Endothelial cell of umbilical vein (primary cell): ENCODE measurements at regions of chr6 and their contacts with region 1.

Region 1: DNA sequence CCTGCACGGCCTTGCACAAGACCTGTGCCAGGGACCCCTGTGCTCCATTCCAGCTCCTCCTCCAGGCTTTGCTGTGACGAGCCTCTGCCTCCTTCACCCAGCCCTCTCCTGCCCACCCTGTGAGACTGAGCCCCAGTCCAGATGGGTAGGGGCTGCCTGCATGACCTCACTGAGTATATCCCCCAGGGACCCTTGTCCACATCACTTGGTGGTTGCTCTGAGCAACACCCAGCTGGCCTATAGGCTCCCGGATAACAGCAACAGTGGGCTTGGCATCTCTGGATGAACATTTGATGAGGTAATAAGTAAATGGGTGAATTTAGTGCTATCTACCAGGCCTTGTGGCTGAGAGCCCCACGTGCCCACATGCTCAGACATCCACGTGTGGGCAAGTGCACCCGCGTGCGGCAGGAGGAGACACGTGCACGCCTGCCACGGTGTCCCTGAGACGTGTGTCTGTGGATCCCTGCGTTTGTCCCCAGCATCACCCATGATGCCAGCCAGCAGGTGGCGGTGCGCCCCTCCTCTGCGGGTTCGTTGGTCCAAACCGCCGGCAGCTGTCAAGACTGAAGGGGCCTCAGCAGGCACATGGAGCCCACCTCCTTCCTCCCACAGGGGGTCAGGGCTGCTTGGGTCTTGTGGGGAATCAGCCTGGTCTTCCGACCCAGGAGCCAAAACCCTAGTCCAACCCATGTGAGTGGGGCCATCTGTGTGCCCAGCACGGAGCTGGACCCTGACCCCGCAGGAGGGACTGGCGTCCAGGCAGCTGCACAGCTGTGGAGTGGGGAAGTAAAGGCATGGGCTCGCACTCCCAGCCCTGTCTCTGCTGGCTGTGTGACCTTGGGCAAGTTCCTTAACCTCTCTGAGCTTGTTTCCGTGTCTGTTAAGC is 45.9 kb downstream of the FGD2 start:
- DNase-seq: peak; percentile 79
- H3K4me3 ChIP-seq: no peak overlapping the region
- H3K27ac ChIP-seq: no peak overlapping the region
- H3K4me1 ChIP-seq: no peaks in the 10 kb centered on the region
- H3K27me3 ChIP-seq: peaks cover 0 to 4% of the 10 kb centered on the region in 2 experiments
- CTCF ChIP-seq: peak; percentile 81 to 93
- POLR2A ChIP-seq: no peak

Region 2: DNA sequence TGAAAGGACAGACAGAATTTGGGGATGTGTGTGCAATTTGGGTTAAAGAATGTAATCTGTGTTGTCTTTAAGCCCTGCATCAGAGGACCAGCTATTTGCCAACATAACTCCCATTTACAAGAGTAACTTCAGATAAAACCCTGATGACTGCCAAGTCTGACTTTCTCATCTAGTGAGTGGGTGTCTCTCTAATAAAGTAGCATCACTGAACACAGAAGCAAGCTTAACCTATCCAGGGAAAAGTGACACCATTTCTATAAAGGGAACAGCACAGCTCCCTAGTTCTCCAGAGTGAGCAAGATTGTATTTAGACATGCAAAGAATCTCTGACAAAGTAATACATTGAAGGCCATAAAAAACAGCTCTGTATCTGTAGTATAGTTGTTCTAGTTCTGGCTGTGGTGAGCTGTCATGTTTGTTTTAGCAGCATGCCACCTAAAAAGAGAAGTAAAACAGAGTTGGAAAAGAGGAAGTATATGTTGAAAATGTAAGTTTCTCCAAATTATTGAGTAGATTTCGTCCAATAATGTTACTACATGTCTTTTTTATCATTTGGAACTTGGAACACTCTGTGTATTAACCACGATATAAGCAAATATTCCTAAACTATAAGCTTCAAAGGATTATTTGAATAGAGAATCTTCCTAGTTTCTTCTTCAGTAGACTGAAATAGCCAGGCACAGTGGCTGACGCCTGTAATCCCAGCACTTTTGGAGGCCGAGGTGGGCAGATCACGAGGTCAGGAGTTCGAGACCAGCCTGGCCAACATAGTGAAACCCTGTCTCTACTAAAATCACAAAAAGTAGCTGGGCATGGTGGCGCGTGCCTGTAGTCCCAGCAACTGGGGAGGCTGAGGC is 109.8 kb after region 1 on chr6:
- CTCF ChIA-PET with region 1: interaction called, 12 read pairs
- POLR2A ChIA-PET with region 1: no interaction called
- dilution Hi-C with region 1: no loop called
- intact Hi-C with region 1: no loop called
- DNase-seq: no peak
- H3K4me3 ChIP-seq: no peak overlapping the region
- H3K27ac ChIP-seq: no peak overlapping the region
- H3K4me1 ChIP-seq: peaks cover 3% of the 10 kb centered on the region
- H3K27me3 ChIP-seq: peaks cover 0 to 4% of the 10 kb centered on the region in 2 experiments
- CTCF ChIP-seq: no peak
- POLR2A ChIP-seq: no peak

Region 3: DNA sequence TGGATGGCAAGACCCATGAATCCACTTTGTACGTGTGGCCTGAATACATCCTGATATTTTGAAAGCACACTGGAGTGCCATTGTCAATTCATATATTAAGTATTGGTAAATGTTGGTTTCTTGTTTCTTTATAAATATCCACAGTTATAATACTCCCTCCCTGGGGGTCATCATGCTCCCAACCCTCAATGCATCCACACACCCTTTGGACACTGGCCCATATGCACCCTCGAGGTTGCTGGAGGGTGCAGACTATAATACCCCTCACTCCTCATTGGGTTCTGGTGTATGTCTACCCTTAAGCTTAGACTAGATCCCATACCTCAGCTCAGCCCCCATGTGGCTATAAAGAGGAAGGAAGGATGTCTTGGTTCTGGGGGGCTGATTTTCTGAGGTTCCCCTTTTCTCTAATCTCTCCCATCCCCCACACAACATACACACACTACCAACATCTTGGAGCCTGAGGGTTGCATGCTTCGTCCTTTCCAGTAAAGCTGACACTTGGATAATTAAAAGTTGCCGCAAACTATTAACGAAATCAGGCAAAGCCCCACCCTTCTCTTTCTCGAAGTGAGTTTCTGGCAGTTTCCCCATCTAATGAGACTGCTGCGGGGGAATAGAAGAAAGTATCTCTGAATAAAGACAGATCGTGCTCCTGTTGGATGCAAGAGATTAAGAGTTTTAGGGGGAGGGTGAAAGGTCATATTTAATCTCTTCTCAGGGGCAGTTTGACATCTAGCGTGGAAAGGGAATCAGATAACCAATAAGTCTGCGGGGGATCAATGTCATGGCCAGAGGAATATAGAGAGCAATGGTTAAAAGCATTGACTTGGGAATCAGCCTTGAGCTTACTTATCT is 125.9 kb after region 1 on chr6:
- CTCF ChIA-PET with region 1: interaction called, 399 read pairs
- POLR2A ChIA-PET with region 1: interaction called, 7 read pairs
- dilution Hi-C with region 1: no loop called
- intact Hi-C with region 1: loop called (anchors 1 kb)
- DNase-seq: no peak
- H3K4me3 ChIP-seq: no peak overlapping the region
- H3K27ac ChIP-seq: no peak overlapping the region
- H3K4me1 ChIP-seq: no peaks in the 10 kb centered on the region
- H3K27me3 ChIP-seq: no peaks in the 10 kb centered on the region
- CTCF ChIP-seq: no peak
- POLR2A ChIP-seq: no peak